GM10248 (cell line): ENCODE measurements at regions of chr2 and their contacts with region 1.

Region 1: GRCh38 chr2:134411828-134412638 is 158.2 kb downstream of the MGAT5 start:
- DNase-seq: peak; percentile 78
- CTCF ChIP-seq: peak; percentile 82

Region 2: DNA sequence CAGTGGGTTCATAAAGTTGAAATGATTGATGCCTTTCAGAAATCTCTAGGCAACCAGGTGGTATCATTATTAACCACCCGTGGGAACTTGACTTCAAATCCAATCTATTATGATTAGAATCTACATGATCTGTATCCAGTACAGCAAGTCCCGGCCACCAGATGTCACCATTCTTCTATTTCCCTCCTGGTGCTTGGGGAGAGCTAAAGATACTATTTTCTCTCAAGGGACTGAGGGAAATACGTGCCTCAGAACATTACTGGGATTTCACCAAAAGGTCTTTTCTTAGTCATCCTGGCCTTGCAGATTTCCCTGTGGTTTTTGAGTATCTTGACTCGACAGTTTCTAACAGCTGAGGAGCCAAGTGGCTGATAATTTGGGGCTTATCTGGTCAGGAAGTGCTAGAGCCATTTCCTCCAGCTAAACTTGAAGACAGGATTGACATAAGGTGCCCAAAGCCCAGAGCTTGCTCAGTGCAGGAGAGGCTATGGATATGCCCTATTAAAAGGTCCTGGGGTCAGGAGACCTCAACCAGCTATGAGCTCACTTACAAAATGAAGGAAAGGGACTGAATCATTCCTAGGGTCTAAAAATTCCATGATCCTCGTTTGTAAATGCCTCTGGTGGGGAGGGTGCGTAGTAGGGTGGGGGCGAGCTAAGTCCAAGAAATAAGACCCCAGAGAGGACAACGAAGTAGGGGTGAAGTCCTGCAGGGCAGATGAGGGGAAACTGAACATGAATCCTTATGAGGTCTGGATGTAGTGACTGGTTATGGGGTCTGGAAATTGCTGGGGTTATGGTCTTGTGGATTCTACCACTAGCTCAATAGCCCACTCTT is 293.5 kb before region 1 on chr2:
- CTCF ChIA-PET with region 1: interaction called, 156 read pairs
- POLR2A ChIA-PET with region 1: interaction called, 4 read pairs
- DNase-seq: peak; percentile 72
- CTCF ChIP-seq: peak; percentile 69

Region 3: DNA sequence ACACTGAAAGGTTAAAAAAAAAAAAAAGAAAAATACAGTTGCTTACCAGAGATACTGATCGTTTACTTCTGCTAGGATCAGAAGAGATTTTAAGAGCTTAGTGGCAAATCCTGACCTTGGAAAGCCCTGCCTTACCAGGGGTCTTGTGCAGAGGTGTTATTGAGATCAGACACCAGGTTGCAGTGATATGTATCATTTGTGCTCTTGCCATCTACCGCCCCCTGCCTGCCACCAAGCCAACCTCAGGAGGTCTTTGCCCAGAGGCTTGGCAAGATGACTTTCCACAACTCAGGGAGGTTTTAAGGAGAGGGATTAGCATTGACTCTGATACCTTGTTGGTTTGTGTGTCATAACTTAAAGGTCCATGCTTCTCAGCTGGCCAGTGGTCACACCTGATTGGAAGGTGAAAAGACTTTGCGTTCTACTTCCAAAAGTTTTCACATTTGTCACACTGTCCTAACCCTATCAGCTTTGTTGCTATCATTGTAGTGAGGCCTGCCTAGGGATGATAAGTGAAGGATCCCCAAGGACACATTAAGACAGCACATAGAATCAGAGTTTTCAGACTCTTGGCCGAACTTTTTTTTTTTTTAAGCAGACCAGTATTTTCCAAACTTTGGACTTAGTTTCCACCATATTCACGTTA is 204.3 kb before region 1 on chr2:
- CTCF ChIA-PET with region 1: interaction called, 32 read pairs
- POLR2A ChIA-PET with region 1: no interaction called
- DNase-seq: peak; percentile 44
- CTCF ChIP-seq: peak; percentile 73

Region 4: GRCh38 chr2:134253804-134254203 is 158.2 kb before region 1 on chr2 and contains the start of gene MGAT5:
- CTCF ChIA-PET with region 1: interaction called, 10 read pairs
- POLR2A ChIA-PET with region 1: no interaction called
- DNase-seq: no peak
- CTCF ChIP-seq: no peak

Region 5: DNA sequence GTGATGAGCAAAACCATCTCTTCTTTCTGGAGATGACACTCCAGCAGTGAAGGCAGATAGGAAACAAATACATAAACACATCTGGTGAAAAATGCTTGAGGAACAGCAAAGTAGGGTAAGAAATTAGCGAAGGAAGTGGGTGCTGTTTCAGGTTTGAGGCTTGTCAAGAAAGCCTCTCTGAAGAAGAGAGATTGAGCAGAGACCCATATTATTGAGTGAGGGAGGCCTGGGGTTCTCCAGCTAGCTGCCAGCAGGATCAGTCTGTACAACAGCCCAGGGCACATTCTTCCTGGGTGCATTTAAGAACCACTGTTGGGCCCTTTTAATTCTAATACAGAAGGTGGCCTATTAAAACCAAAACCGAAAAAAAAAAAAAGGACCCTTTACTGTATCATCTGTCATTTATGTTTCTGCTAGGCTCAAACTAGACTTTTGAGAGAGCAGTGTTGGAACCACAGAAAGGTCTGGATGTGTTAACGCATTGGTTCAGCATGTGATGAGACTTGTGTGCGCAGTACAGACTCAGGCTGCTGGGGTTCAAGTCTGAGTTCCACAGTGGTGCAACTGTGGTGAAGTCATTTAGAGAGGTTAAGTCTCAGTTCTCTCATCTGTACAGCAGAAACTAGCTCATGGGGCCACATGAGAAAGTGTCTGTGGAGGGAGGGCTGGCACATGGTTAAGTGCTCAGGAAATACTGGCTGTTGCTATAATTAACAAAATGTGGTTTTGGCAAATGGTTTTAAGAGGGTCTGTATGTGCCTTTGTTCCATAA is 129.2 kb before region 1 on chr2:
- CTCF ChIA-PET with region 1: interaction called, 12 read pairs
- POLR2A ChIA-PET with region 1: no interaction called
- DNase-seq: peak; percentile 46
- CTCF ChIP-seq: no peak

Region 6: DNA sequence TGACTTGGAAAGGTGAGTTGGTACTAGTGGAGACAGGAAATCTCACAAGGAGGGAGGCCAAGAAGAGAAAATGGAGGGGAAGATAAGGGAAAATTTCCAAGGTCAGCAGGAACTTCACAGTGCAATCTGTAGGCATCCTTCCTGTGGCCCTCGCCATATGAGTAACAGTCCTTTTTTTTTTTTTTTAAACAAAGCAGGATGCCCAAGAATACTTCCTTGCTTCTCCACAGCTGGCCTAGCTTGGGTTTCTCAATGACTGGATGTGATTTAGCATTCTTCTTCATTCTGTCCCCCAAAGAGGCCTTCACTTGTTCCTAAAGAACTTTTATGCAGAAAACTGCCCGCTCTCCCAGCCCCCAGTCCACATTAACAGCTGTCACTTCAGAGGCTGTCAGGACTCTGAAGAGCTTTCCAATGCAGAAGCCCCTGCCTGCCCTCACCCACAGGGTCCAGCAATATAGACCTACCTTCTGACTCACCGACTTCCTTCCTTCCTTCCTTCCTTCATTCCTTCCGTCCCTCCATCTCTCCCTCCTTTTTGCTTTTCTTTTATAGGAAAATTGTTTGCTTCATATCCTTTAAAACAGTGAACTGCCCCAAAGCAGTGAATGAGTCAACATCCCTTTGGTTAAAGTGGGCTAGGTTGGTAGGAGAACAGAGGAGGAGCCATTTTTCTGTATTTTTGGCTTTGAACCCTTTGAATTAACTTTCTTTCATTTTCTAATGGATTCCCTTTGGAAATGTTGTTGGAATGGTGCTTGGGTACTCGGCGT is 13.9 kb after region 1 on chr2:
- CTCF ChIA-PET with region 1: interaction called, 43 read pairs
- POLR2A ChIA-PET with region 1: no interaction called
- DNase-seq: no peak
- CTCF ChIP-seq: no peak

Region 7: DNA sequence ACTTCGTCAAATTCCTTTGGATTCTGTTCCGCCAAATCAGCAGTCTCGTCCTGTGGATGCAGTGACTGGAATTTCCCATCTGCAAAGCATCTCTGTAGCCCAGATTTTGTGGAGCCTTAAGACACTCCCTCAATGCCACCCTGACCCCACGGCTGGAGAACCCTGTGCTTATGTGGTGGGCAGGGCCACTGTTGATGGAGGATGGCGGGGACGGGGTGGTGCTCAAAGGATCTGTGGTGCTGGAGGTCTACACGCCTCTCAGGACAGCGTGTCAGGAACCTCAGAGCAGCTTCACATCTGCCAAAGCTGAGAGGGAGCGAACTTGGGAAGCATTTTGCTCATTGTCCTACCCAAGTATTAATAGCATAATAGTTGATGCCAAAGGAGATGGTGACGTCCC is 41.9 kb after region 1 on chr2:
- CTCF ChIA-PET with region 1: interaction called, 28 read pairs
- POLR2A ChIA-PET with region 1: no interaction called
- DNase-seq: no peak
- CTCF ChIP-seq: no peak

Region 8: GRCh38 chr2:134491771-134492441 is 79.9 kb after region 1 on chr2:
- CTCF ChIA-PET with region 1: no interaction called
- POLR2A ChIA-PET with region 1: no interaction called
- DNase-seq: no peak
- CTCF ChIP-seq: no peak

Region 9: GRCh38 chr2:134603966-134604365 is 191.9 kb after region 1 on chr2:
- CTCF ChIA-PET with region 1: no interaction called
- POLR2A ChIA-PET with region 1: no interaction called
- DNase-seq: no peak
- CTCF ChIP-seq: no peak